PC-9 (cell line): ENCODE measurements at regions of chrX and their contacts with region 1.

Region 1: GRCh38 chrX:119791438-119792231 is at the start of gene RPL39:
- DNase-seq: peak; percentile 84 to 86
- H3K4me3 ChIP-seq: peak within 1 kb of the TSS; percentile 96
- H3K27ac ChIP-seq: peak within 1 kb of the TSS; percentile 94
- H3K4me1 ChIP-seq: peaks cover 34% of the 10 kb centered on the region
- H3K27me3 ChIP-seq: no peaks in the 10 kb centered on the region
- CTCF ChIP-seq: no peak
- total RNA-seq, gene RPL39: 3,176 and 3,660 TPM in 2 replicates

Region 2: DNA sequence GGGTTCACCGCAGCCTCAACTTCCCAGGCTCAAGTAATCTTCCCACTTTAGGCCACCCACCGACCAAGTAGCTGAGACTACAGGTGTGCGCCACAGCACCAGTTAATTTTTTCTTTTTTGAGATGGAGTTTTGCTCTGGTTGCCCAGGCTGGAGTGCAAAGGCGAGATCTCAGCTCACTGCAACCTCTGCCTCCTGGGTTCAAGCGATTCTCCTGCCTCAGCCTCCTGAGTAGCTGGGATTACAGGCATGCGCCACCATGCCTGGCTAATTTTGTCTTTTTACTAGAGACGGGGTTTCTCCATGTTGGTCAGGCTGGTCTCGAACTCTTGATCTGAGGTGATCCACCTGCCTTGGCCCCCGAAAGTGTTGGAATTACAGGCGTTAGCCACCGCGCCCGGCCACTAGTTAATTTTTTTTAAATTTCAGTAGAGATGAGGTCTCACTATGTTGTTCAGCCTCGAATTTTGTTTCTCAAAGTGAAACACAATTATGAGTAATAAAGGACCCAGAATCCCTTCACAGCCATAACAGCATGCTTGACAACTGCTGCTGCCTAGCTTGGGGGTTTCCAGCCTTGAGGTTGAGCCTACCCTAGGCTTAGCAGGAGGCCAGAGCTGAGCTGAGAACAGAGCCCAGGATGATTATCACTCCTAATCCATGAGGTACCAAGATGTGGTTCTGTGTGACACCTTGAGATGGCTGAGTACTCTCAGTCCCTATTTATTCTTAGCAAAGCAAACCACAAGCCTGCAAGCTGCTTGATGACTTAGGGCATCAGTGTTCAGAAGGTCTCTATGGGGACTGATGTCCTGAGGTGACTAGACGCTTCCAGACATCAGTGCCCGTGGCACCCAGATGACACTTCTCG is 143.8 kb before region 1 on chrX:
- CTCF ChIA-PET with region 1: no interaction called
- POLR2A ChIA-PET with region 1: interaction called, 13 read pairs
- intact Hi-C with region 1: no loop called
- DNase-seq: no peak
- H3K4me3 ChIP-seq: no peak overlapping the region
- H3K27ac ChIP-seq: no peak overlapping the region
- H3K4me1 ChIP-seq: no peaks in the 10 kb centered on the region
- H3K27me3 ChIP-seq: no peaks in the 10 kb centered on the region
- CTCF ChIP-seq: no peak

Region 3: DNA sequence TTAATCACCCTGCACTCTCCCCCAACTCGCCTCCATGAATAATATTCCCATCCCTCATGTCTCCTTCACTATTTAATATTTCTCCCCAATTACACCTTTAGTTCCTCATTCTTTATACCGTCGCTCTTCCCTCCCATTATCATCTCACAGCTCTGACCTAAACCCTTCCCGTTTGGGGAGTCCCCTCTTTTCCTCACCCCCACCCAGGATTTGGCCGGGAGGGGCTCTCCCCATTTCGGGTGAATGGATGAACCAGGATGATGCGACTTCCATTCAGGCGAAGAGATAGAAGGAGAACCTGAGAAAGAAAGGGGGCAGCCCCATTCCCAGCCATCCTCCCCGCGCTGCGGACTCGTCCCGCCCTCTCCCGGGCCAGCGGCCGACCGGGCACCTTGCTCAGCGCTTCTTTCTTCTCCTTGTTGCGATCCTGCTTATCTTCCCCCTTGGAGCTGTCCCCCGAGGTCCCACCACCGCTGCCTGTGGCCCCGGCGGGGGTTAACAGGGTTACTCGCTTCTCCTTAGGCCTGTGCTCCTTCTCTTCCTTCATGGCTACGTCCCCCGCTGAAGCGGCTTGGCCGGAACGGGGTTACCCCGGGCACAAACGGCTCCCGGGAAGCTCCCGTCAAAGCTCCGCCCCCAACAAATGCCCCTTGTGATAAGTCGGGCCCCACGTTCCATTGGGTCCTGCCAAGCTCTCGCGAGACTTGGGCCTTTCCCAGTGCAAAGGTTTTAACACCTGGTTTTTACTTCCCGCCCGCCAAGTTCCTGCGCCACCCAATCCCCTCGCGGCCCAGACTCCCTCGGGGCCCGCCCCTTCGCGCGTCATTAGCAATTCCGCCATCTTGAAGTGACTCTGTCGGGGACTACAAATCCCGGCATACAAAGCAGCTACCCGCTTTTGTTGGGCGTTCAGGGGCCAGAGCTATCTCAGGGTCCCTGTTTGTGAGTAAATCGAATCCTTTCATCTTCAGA is 61.0 kb after region 1 on chrX and contains the start of gene UPF3B:
- CTCF ChIA-PET with region 1: no interaction called
- POLR2A ChIA-PET with region 1: interaction called, 11 read pairs
- intact Hi-C with region 1: loop called (anchors 2 kb)
- DNase-seq: peak; percentile 98 to 99
- H3K4me3 ChIP-seq: peak within 1 kb of the TSS; percentile 89
- H3K27ac ChIP-seq: peak within 1 kb of the TSS; percentile 62
- H3K4me1 ChIP-seq: no peaks in the 10 kb centered on the region
- H3K27me3 ChIP-seq: no peaks in the 10 kb centered on the region
- CTCF ChIP-seq: no peak
- total RNA-seq, gene UPF3B: 19.8 and 24.3 TPM in 2 replicates

Region 4: GRCh38 chrX:119887721-119888425 is 96.2 kb after region 1 on chrX:
- CTCF ChIA-PET with region 1: interaction called, 4 read pairs
- POLR2A ChIA-PET with region 1: interaction called, 18 read pairs
- intact Hi-C with region 1: no loop called
- DNase-seq: peak; percentile 65 to 77
- H3K4me3 ChIP-seq: peak overlapping the region; percentile 66
- H3K27ac ChIP-seq: no peak overlapping the region
- H3K4me1 ChIP-seq: no peaks in the 10 kb centered on the region
- H3K27me3 ChIP-seq: no peaks in the 10 kb centered on the region
- CTCF ChIP-seq: peak; percentile 83

Region 5: GRCh38 chrX:120560842-120561633 is 769.4 kb after region 1 on chrX and contains the start of gene CUL4B:
- CTCF ChIA-PET with region 1: no interaction called
- POLR2A ChIA-PET with region 1: interaction called, 12 read pairs
- intact Hi-C with region 1: no loop called
- DNase-seq: peak; percentile 94 to 95
- H3K4me3 ChIP-seq: peak within 1 kb of the TSS; percentile 92
- H3K27ac ChIP-seq: peak within 1 kb of the TSS; percentile 98
- H3K4me1 ChIP-seq: peaks cover 33% of the 10 kb centered on the region
- H3K27me3 ChIP-seq: no peaks in the 10 kb centered on the region
- CTCF ChIP-seq: 0 out of 2 replicates have a peak, but pooled peaks have one; percentile 24
- total RNA-seq, gene CUL4B: 98.6 and 154 TPM in 2 replicates